Activated naive CD4-positive, alpha-beta T cell treated with anti-CD3 and anti-CD28 coated beads for 36 hours (primary cell): ENCODE measurements at regions of chr2 and their contacts with region 1.

Region 1: DNA sequence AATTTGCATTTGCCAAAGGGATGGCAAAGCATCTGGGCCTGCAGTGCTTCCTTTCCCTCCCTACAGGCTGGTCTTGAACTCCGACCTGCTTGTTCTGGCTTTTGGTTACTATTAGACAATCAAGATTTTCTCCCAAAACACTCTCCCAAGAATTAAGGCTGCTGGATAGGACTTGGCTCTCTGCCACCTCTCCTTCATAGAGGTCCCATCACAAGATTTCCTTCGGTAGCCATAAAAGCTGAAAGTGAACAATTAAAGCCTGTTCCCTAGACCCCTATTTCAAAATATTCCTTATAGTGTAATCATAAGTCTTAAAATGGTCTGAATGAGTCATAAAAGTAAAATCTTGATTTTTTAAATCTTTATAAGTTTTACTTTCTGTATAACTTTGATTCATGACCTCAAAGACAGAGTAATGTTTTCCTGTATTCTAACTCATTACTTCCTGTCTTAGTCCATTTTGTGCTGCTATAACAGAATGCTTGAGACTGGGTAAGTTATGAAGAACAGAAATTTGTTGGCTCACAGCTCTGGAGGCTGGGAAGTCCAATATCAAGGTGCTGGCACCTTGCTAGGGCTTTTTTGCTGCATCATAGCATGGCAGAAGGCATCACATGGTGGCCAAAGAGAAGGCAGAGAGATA is 37.8 kb upstream of the TNP1 start:
- DNase-seq: no peak
- H3K4me3 Mint-ChIP-seq: no peak overlapping the region
- H3K27ac Mint-ChIP-seq: no peak overlapping the region
- H3K4me1 Mint-ChIP-seq: peaks cover 5% of the 10 kb centered on the region
- H3K27me3 Mint-ChIP-seq: no peaks in the 10 kb centered on the region

Region 2: GRCh38 chr2:216880509-216881184 is 17.0 kb before region 1 on chr2:
- CTCF ChIA-PET with region 1: no interaction called
- intact Hi-C with region 1: no loop called
- DNase-seq: peak; percentile 21
- H3K4me3 Mint-ChIP-seq: no peak overlapping the region
- H3K27ac Mint-ChIP-seq: no peak overlapping the region
- H3K4me1 Mint-ChIP-seq: peaks cover 11% of the 10 kb centered on the region
- H3K27me3 Mint-ChIP-seq: no peaks in the 10 kb centered on the region

Region 3: DNA sequence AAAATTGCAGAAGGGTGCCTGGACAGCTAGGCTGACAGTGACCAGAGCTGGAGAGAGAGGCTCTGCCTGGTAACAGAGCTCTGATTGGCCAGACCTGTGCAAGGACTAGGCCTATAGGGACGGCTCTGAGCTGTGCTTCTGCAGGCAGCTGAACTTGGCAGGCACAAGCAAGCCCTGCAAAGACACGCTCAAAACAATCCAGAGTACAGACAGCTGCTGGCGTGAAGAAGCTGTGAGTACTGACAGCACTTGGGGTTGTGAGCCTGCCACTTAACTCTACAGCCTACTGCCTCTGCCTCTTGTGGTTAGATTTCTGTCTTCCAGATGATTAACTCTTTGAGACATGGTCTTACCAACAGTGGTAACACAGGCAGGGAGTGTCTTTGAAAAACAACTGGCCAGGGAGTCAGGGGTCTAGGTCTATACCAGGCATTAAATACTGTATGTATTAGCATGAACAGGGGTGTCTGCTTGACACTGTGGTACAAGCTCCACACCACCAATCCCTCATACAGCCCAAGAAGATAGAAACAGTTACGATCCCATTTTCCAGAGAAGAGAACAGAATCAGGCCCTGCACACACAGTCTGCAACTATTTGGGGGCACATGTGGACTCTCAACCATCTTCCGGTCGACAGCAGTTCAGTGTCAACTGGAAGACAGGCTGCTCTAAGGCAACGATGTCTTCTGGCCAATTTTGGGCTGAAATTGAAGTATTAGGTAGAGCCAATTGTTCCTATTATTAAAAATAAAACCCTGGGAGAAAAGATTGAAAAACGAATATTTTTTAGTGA is 536.7 kb after region 1 on chr2:
- CTCF ChIA-PET with region 1: no interaction called
- intact Hi-C with region 1: loop called (anchors 10 kb)
- DNase-seq: peak; percentile 30
- H3K4me3 Mint-ChIP-seq: no peak overlapping the region
- H3K27ac Mint-ChIP-seq: no peak overlapping the region
- H3K4me1 Mint-ChIP-seq: peaks cover 4% of the 10 kb centered on the region
- H3K27me3 Mint-ChIP-seq: no peaks in the 10 kb centered on the region